Head of caudate nucleus (tissue), 42 donors: ENCODE measurements at regions of chr19 and their contacts with region 1.

Region 1: DNA sequence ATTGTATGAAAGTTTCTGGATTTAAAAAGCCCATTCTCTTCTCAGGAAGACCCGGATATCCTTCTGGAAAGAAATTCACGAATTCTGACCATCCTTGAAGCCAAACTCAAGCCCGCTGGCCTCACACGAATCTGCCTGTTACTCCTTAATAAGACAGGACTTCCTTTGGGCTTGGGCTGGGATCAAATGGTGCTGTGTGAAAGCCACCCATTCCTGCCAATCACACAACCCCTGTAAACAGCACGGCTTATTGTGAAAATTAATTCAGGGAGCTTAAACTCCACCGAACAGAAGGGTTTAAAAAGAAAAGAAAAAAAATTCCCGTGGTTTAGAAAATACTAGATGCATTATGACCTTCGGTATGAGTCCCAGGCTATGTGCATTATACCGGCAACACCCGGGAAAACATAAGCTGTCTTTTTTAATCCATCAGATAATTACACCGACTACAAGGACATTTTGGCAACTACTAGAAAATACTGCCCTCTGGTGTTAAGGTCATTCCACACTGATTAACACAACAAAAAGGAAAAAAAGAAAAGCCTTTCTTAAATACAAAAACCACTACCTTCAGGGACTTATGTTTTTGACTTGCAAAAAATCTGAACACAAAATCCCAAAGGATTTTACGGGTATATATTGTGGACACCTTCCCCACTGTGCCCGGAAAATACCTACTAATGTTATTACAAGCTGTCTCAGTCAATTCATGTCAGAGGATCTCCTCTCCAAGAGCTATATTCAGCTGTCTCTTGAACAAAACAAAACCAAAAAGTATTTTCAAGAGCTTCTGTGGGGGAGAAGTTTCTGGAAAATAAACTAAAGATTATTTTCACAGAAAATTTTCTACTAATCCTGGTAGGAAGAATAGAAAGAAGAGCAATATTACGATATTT is 76.0 kb upstream of the LSM14A start:
- DNase-seq: peak in 15 of 42 donors; percentile 3 to 43 (median 12)

Region 2: GRCh38 chr19:33778089-33778791 is 318.0 kb before region 1 on chr19:
- intact Hi-C with region 1: loop called (anchors 5 kb)
- DNase-seq: peak; percentile 51 to 93 (median 86)